Activated CD4-positive, alpha-beta T cell treated with anti-CD3 and anti-CD28 coated beads for 36 hours (primary cell): ENCODE measurements at regions of chr6 and their contacts with region 1.

Region 1: GRCh38 chr6:33410050-33410710 is 634 bp upstream of the PHF1 start:
- DNase-seq: peak; percentile 98
- ATAC-seq: peak; percentile 88
- H3K4me3 Mint-ChIP-seq: peak overlapping the region; percentile 80
- H3K27ac Mint-ChIP-seq: peak overlapping the region; percentile 96
- H3K4me1 Mint-ChIP-seq: peaks cover 31% of the 10 kb centered on the region
- H3K27me3 Mint-ChIP-seq: no peaks in the 10 kb centered on the region

Region 2: DNA sequence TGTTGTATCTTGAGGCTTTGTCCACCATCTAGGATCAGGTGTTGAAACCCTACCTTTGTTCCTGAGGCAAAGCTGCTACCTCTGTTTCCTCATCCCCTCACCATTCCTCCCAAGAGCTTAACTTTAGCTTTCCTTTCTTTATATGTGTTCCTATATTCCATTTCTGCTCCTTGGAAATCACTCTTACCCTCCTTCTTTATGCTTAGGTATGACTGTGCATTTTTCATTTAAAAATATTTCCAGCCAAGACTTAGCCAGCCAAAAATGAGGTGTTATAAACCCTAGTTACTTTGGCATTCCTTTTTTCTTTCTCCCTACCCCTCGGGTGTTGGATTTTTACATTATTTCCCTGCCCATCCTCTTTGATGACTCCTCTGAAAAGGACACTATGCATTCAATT is 1096.2 kb before region 1 on chr6:
- CTCF ChIA-PET with region 1: no interaction called
- POLR2A ChIA-PET with region 1: no interaction called
- intact Hi-C with region 1: no loop called
- DNase-seq: no peak
- ATAC-seq: no peak
- H3K4me3 Mint-ChIP-seq: no peak overlapping the region
- H3K27ac Mint-ChIP-seq: no peak overlapping the region
- H3K4me1 Mint-ChIP-seq: no peaks in the 10 kb centered on the region
- H3K27me3 Mint-ChIP-seq: peaks cover 13% of the 10 kb centered on the region

Region 3: GRCh38 chr6:32609731-32610640 is 800.2 kb before region 1 on chr6:
- CTCF ChIA-PET with region 1: no interaction called
- POLR2A ChIA-PET with region 1: no interaction called
- intact Hi-C with region 1: no loop called
- DNase-seq: peak; percentile 60
- ATAC-seq: peak; percentile 98
- H3K4me3 Mint-ChIP-seq: no peak overlapping the region
- H3K27ac Mint-ChIP-seq: no peak overlapping the region
- H3K4me1 Mint-ChIP-seq: peaks cover 16% of the 10 kb centered on the region
- H3K27me3 Mint-ChIP-seq: peaks cover 6% of the 10 kb centered on the region

Region 4: GRCh38 chr6:32853541-32854375 is 556.4 kb before region 1 on chr6 and contains the starts of genes PSMB9 and TAP1:
- CTCF ChIA-PET with region 1: no interaction called
- POLR2A ChIA-PET with region 1: no interaction called
- intact Hi-C with region 1: loop called (anchors 5 kb)
- DNase-seq: peak; percentile 98
- ATAC-seq: peak; percentile 84
- H3K4me3 Mint-ChIP-seq: peak within 1 kb of the TSS; percentile 100
- H3K27ac Mint-ChIP-seq: peak within 1 kb of the TSS; percentile 99
- H3K4me1 Mint-ChIP-seq: peaks cover 62% of the 10 kb centered on the region
- H3K27me3 Mint-ChIP-seq: no peaks in the 10 kb centered on the region
- total RNA-seq, gene PSMB9: 210 to 282 TPM
- total RNA-seq, gene TAP1: 191 to 255 TPM

Region 5: GRCh38 chr6:33299237-33299944 is 110.8 kb before region 1 on chr6:
- CTCF ChIA-PET with region 1: no interaction called
- POLR2A ChIA-PET with region 1: no interaction called
- intact Hi-C with region 1: loop called in 1 of 2 experiments (anchors 1 kb)
- DNase-seq: peak; percentile 97
- ATAC-seq: peak; percentile 87
- H3K4me3 Mint-ChIP-seq: peak overlapping the region; percentile 80
- H3K27ac Mint-ChIP-seq: peak overlapping the region; percentile 98
- H3K4me1 Mint-ChIP-seq: peaks cover 28% of the 10 kb centered on the region
- H3K27me3 Mint-ChIP-seq: no peaks in the 10 kb centered on the region

Region 6: GRCh38 chr6:33425668-33426577 is 15.7 kb after region 1 on chr6:
- CTCF ChIA-PET with region 1: interaction called, 5 read pairs
- POLR2A ChIA-PET with region 1: no interaction called
- intact Hi-C with region 1: loop called (anchors 1 to 2 kb)
- DNase-seq: peak; percentile 93
- ATAC-seq: peak; percentile 49
- H3K4me3 Mint-ChIP-seq: peak overlapping the region; percentile 88
- H3K27ac Mint-ChIP-seq: peak overlapping the region; percentile 90
- H3K4me1 Mint-ChIP-seq: peaks cover 65% of the 10 kb centered on the region
- H3K27me3 Mint-ChIP-seq: no peaks in the 10 kb centered on the region